HCT116 (cell line): ENCODE measurements at regions of chr7 and their contacts with region 1.

Region 1: DNA sequence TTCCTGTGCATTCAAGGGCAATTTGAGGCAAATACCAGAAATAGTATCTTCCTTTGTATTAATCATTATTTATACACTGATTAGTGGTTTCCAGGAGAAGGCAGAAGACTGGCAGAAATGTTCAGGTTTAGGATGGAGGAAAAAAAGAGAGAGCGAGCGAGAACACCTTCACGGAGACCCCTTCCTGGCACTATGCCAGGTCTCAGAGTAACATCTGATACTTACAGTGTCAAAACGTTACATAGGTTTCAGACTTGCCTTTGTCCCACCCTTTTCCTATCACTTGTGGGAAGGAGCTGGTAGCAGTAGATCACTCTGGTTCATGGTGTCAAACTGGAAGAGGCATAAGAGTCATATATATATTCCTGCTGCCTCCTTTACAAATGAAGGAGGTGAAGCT is 652 bp downstream of the OR2A12 start:
- DNase-seq: no peak
- ATAC-seq: no peak
- H3K4me3 ChIP-seq: no peak overlapping the region
- H3K27ac ChIP-seq: no peak overlapping the region
- H3K4me1 ChIP-seq: no peaks in the 10 kb centered on the region
- H3K27me3 ChIP-seq: no peaks in the 10 kb centered on the region
- CTCF ChIP-seq: no peak
- POLR2A ChIP-seq: no peak
- RAD21 ChIP-seq: no peak

Region 2: GRCh38 chr7:143884969-143885559 is 201.7 kb before region 1 on chr7:
- CTCF ChIA-PET with region 1: no interaction called
- POLR2A ChIA-PET with region 1: no interaction called
- RAD21 ChIA-PET with region 1: no interaction called
- intact Hi-C with region 1: no loop called
- DNase-seq: no peak
- ATAC-seq: 0 out of 2 replicates have a peak, but pooled peaks have one; percentile 30
- H3K4me3 ChIP-seq: no peak overlapping the region
- H3K27ac ChIP-seq: no peak overlapping the region
- H3K4me1 ChIP-seq: no peaks in the 10 kb centered on the region
- H3K27me3 ChIP-seq: no peaks in the 10 kb centered on the region
- CTCF ChIP-seq: no peak
- POLR2A ChIP-seq: no peak
- RAD21 ChIP-seq: no peak

Region 3: GRCh38 chr7:144020360-144020759 is 66.4 kb before region 1 on chr7:
- CTCF ChIA-PET with region 1: no interaction called
- POLR2A ChIA-PET with region 1: no interaction called
- RAD21 ChIA-PET with region 1: no interaction called
- intact Hi-C with region 1: loop called (anchors 5 kb)
- DNase-seq: no peak
- ATAC-seq: no peak
- H3K4me3 ChIP-seq: no peak overlapping the region
- H3K27ac ChIP-seq: no peak overlapping the region
- H3K4me1 ChIP-seq: no peaks in the 10 kb centered on the region
- H3K27me3 ChIP-seq: no peaks in the 10 kb centered on the region
- CTCF ChIP-seq: no peak
- POLR2A ChIP-seq: no peak
- RAD21 ChIP-seq: no peak